Activated CD4-positive, alpha-beta T cell treated with anti-CD3 and anti-CD28 coated beads for 36 hours (primary cell): ENCODE measurements at regions of chr6 and their contacts with region 1.

Region 1: DNA sequence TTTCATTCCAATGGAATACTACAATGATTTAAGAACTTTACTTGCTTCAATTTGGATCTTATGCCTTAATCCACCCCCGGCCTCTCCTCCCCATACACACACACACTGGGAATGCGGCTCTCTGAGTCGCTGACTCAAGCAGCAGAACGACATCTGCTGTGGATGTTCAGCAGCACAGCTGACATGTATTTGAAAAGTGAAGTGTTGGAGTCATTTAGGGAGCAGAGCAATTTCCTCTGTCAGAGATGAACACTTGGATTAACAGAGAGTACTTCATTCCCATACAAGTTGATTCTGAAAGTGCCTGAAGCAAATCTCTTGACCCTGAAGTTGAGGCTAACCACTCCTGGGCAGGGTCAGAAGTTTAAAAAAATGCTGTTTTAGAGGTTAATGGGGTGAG is 27.9 kb upstream of the LAMA4 start:
- DNase-seq: no peak
- ATAC-seq: no peak
- H3K4me3 Mint-ChIP-seq: no peak overlapping the region
- H3K27ac Mint-ChIP-seq: no peak overlapping the region
- H3K4me1 Mint-ChIP-seq: peaks cover 16% of the 10 kb centered on the region
- H3K27me3 Mint-ChIP-seq: peaks cover 33% of the 10 kb centered on the region

Region 2: DNA sequence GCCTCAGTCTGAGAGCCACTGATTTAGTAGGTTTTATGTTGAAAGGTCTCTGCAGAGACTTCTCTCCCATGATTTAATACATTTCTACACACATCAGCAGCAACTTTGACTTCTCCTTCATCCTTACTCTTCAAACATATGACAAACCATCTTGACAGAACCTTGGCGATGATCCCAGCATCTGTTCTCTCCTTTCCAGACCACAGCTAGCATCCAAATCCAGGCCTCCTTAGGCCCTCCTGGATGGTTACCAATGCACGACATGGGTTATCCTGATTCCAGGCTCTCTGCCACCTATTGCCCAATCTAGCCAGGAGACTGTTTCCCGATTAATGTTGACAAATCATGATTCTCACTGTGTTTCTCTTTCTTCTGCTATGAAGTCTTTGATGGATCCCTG is 44.6 kb before region 1 on chr6:
- CTCF ChIA-PET with region 1: no interaction called
- POLR2A ChIA-PET with region 1: no interaction called
- intact Hi-C with region 1: loop called (anchors 1 to 2 kb)
- DNase-seq: no peak
- ATAC-seq: no peak
- H3K4me3 Mint-ChIP-seq: no peak overlapping the region
- H3K27ac Mint-ChIP-seq: no peak overlapping the region
- H3K4me1 Mint-ChIP-seq: peaks cover 16% of the 10 kb centered on the region
- H3K27me3 Mint-ChIP-seq: peaks cover 12% of the 10 kb centered on the region

Region 3: GRCh38 chr6:112298021-112298745 is 16.0 kb after region 1 on chr6:
- CTCF ChIA-PET with region 1: no interaction called
- POLR2A ChIA-PET with region 1: no interaction called
- intact Hi-C with region 1: no loop called
- DNase-seq: no peak
- ATAC-seq: no peak
- H3K4me3 Mint-ChIP-seq: no peak overlapping the region
- H3K27ac Mint-ChIP-seq: no peak overlapping the region
- H3K4me1 Mint-ChIP-seq: no peaks in the 10 kb centered on the region
- H3K27me3 Mint-ChIP-seq: peaks cover 8% of the 10 kb centered on the region